Adrenal gland (tissue), 19 donors: ENCODE measurements at regions of chr11 and their contacts with region 1.

Region 1: DNA sequence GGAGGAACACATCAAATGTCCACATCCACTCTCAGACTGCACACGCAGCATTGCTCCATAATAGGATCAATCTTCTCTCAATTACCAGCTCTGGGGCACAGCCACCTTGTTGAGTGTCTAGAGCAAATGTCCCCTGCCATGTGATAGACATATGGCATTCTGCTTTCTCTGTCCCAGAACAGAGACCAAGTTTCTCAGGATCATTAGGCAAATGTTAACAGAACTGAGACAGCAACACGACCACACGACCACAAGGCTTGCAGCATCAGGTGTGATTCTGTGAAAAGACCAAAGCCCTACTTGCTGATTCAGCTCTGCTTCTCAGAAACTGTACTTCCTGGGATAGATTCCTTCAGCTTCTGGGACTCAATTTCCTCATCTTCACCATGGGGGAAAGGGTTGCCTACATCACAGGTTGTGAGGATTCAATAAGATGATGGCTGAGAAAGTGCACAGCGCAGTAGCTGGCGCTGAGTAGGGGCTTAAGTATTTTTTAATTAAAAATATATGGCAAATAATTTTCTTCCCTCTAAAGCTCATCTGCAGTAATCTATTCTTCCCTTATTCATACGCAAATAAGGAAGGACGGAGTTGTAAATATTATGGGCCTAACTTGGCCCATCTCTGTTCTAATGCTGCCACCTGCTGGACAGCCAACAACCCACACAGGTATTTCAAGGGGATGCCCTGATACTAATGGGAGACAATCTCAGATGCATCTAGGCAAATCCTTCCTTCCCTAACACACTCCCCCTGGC is 54.3 kb upstream of the USP47 start:
- DNase-seq: peak; percentile 55 to 90 (median 76)
- H3K4me3 ChIP-seq: no peak overlapping the region
- H3K27ac ChIP-seq: no peak overlapping the region
- H3K4me1 ChIP-seq: no peaks in the 10 kb centered on the region
- H3K27me3 ChIP-seq: no peaks in the 10 kb centered on the region
- CTCF ChIP-seq: peak; percentile 76 to 92 (median 88)
- POLR2A ChIP-seq: no peak

Region 2: GRCh38 chr11:11036848-11037732 is 750.4 kb before region 1 on chr11:
- intact Hi-C with region 1: loop called (anchors 5 kb)
- DNase-seq: peak in 6 of 7 donors; percentile 22 to 64 (median 36)
- H3K4me3 ChIP-seq: no peak overlapping the region
- H3K27ac ChIP-seq: peak overlapping the region in 1 of 5 donors; percentile 22
- H3K4me1 ChIP-seq: peaks cover 0 to 10% of the 10 kb centered on the region in 2 donors
- H3K27me3 ChIP-seq: no peaks in the 10 kb centered on the region
- CTCF ChIP-seq: peak; percentile 28 to 74 (median 58)
- POLR2A ChIP-seq: no peak

Region 3: DNA sequence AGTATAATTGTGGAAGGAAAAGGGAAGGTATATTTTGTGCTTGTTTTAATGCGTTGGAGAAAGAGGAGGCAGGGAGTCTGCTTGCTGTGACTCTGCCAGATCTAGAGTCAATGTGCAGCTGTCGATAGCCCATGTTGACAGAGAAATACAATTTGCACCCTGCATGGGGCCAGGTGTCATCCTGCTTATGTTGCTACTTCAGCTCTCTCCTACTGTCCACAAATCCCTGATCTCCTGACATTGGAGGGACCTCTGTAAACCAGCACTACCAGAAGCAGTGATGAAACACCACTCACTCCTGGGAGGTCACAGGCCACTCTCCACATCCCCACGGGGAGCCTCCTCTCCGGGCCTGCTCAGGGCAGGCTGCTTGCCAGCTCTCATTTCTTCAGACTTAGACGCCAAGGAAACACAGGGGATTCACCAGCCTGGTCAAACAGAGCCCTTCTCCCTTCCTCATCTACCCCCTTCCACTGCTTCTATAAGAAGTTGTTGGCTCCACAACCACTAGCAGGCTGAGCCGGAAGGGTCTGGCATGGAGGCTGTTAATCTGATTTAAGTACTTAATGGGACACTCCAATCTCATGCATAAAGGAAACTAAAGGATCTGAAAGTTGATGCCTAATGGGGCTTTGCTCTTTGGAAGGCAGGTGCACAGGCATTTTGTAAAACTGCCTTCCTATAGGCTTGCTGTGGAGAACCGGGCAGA is 404.5 kb before region 1 on chr11:
- intact Hi-C with region 1: loop called in 1 of 2 experiments (anchors 10 kb)
- DNase-seq: no peak
- H3K4me3 ChIP-seq: no peak overlapping the region
- H3K27ac ChIP-seq: no peak overlapping the region
- H3K4me1 ChIP-seq: peaks cover 0 to 8% of the 10 kb centered on the region in 2 donors
- H3K27me3 ChIP-seq: no peaks in the 10 kb centered on the region
- CTCF ChIP-seq: no peak
- POLR2A ChIP-seq: no peak